Endothelial cell of umbilical vein (primary cell): ENCODE measurements at regions of chr13 and their contacts with region 1.

Region 1: GRCh38 chr13:36297366-36298338 is at the start of gene CCDC169:
- DNase-seq: peak; percentile 85
- H3K4me3 ChIP-seq: peak within 1 kb of the TSS; percentile 31 to 69 (median 59)
- H3K27ac ChIP-seq: peak within 1 kb of the TSS; percentile 17
- H3K4me1 ChIP-seq: peaks cover 18% of the 10 kb centered on the region
- H3K27me3 ChIP-seq: no peaks in the 10 kb centered on the region
- CTCF ChIP-seq: no peak
- POLR2A ChIP-seq: peak; percentile 84
- total RNA-seq, gene CCDC169: 2.5 and 5.3 TPM in 2 replicates

Region 2: DNA sequence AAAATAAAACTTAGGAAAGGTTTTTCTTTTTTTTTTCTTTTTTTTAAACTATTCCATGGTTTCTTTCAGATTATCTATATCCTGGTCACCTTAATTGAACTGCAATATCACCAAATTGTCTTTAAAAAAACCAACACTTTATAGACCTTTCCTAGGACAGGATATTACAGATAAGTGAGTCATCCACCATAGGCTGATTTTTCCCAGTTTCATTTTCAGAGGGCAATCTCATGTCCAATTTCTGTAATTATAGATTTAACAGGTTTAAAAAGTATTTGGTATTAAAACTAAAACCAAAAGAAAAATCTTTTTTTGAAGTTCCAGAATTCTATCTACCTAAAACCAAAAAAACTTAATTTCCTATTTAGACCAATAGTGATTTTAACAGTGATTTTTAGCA is 35.3 kb after region 1 on chr13:
- CTCF ChIA-PET with region 1: no interaction called
- POLR2A ChIA-PET with region 1: no interaction called
- dilution Hi-C with region 1: no loop called
- intact Hi-C with region 1: loop called (anchors 2 kb)
- DNase-seq: peak; percentile 65
- H3K4me3 ChIP-seq: no peak overlapping the region
- H3K27ac ChIP-seq: peak overlapping the region; percentile 79
- H3K4me1 ChIP-seq: peaks cover 13% of the 10 kb centered on the region
- H3K27me3 ChIP-seq: no peaks in the 10 kb centered on the region
- CTCF ChIP-seq: no peak
- POLR2A ChIP-seq: no peak